GM12878 (cell line): ENCODE measurements at regions of chr12 and their contacts with region 1.

Region 1: DNA sequence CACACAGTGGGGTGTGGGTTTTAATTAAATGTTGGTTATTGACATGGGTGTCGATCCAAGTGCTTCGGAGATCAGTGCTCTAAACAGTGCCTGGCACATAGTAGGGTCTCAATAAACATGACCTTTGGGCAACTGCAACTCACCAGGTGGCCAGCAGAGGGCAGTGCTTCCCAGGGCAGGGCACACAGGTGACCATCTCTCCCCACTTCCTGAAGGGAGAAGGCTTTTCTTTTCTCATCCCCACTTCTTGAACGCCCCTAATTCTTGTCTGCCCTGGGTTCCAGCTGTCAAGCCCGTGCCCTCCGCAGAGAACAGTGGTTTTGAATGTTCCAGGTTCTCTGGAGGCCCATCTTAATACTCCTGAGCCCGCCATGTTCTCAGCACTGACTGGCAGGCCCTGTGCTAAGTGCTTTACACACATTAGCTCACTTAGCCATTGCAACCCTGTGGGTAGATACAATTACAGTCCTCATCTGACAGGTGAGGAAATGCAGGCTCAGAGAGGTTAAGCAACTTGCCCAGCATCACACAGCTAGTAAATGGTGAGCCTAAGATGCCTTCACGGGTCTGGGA is 16.3 kb downstream of the RAPGEF3 start:
- DNase-seq: no peak
- ATAC-seq: peak; percentile 57
- H3K4me3 ChIP-seq: no peak overlapping the region
- H3K27ac ChIP-seq: no peak overlapping the region
- H3K4me1 ChIP-seq: peaks cover 28% of the 10 kb centered on the region
- H3K27me3 ChIP-seq: no peaks in the 10 kb centered on the region
- CTCF ChIP-seq: peak; percentile 97 to 99 (median 99)
- EP300 ChIP-seq: no peak
- POLR2A ChIP-seq: no peak
- RAD21 ChIP-seq: peak; percentile 91

Region 2: DNA sequence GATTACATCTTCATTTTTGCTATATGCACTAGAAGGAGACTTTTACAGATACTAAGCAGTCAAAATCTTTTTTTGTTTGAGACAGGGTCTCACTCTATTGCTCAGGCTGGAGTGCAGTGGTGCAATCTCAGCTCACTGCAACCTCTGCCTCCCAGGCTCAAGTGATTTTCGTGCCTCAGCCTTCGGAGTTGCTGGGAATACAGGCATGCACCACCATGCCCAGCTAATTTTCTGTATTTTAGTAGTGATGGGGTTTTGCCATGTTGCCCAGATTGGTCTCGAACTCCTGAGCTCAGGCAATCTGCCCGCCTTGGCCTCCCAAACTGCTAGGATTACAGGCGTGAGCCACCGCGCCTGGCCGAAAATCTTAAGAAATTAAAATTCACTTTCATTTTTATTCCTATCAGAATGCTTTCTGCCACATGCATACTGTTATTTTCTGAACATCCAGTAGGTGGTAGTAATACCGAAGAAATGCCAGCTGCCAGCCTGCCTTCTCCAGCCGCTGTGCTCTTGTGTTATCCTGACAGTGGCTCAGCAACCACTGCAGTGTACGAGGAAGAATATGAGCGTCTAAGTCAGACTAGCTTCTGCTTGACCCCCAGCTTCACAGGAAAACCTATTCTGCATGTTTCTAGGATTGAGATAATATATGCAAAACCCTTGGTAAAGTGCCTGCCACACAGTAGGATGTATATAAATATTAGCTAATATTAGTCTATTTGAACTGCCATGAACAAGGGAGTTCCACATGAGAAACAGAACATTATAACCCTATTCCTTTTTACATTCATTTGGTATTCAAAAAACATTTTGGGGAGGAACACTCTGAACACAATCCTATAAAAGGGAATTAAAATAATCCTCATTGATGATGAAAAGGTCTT is 90.7 kb before region 1 on chr12:
- CTCF ChIA-PET with region 1: interaction called, 51 read pairs
- POLR2A ChIA-PET with region 1: no interaction called
- RAD21 ChIA-PET with region 1: interaction called, 12 read pairs
- SMC1A ChIA-PET with region 1: interaction called, 11 read pairs
- in situ Hi-C with region 1: no loop called
- intact Hi-C with region 1: no loop called
- DNase-seq: peak; percentile 23
- ATAC-seq: peak; percentile 96
- H3K4me3 ChIP-seq: no peak overlapping the region
- H3K27ac ChIP-seq: no peak overlapping the region
- H3K4me1 ChIP-seq: peaks cover 13% of the 10 kb centered on the region
- H3K27me3 ChIP-seq: no peaks in the 10 kb centered on the region
- CTCF ChIP-seq: peak; percentile 57 to 72 (median 67)
- EP300 ChIP-seq: no peak
- POLR2A ChIP-seq: no peak
- RAD21 ChIP-seq: peak; percentile 67

Region 3: DNA sequence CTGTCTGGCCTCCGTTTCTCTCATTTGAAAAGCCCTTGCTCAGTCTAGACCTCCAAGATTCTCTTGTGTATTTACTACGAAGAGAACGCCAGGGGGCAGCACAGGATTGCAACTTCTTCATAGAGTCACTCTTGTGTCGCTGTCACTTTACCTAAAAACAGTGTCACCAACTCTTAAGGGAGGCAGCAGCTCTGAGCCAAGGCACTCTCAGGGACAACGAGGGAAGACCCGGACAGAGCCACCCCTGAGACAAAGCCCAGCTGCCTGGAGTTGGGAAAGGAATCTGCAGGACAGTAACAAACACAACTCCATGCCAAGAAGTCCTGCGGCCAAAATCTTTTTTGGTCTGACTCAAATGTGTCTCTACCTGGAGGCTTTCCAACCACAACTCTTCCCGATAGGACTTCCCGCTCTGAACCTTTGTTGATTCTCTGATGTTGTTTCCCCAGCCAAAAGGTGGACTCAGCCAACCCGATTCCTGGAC is 26.9 kb before region 1 on chr12:
- CTCF ChIA-PET with region 1: interaction called, 151 read pairs
- POLR2A ChIA-PET with region 1: interaction called, 3 read pairs
- RAD21 ChIA-PET with region 1: interaction called, 61 read pairs
- SMC1A ChIA-PET with region 1: interaction called, 129 read pairs
- in situ Hi-C with region 1: no loop called
- intact Hi-C with region 1: loop called (anchors 1 kb)
- DNase-seq: no peak
- ATAC-seq: peak; percentile 92
- H3K4me3 ChIP-seq: no peak overlapping the region
- H3K27ac ChIP-seq: no peak overlapping the region
- H3K4me1 ChIP-seq: no peaks in the 10 kb centered on the region
- H3K27me3 ChIP-seq: no peaks in the 10 kb centered on the region
- CTCF ChIP-seq: peak; percentile 65 to 88 (median 75); a peak in 5 of 6 replicates
- EP300 ChIP-seq: no peak
- POLR2A ChIP-seq: no peak
- RAD21 ChIP-seq: peak; percentile 92

Region 4: DNA sequence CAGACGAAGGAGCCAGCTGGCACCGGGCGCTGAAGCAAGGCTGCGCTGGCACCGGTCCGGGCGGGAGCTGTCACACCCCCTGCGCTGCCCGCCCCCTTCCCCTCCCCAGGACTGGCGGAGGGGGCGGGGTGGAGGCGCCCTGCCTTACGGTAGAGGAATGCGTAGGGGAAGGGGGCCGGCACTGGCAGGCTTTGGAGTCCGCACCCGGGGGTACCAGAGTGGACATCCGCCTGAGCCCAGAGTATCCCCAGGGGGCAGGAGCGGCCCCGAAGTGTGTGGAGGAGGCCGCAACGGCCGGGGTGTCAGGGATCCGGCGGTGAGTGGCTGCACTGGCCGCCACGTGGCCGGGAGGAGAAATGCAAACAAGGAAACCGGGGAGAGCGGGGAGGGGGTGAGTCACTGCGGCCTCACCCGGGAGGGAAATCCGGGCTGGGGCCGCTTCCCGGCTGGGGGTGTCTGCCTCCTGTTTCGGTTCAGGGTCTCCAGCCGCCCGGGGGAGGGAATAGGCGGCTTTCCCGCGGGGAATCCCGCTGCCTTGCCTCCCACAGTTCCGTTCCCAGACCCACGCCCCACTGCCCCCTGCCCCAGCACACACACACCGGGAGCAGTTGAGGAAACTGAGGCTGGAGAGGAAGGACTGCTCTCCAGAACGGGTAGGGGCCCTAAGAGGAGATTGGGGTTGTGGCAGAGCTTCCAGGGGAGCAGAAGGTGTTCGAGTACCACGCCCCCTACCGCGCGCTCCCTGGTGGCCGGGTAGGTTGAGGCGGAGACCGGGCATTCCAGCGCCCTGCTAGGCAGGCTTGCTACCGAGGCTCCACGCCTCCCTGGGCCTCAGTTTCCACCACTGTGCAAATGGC is 16.7 kb after region 1 on chr12 and contains the start of gene RAPGEF3:
- CTCF ChIA-PET with region 1: interaction called, 507 read pairs
- POLR2A ChIA-PET with region 1: interaction called, 14 read pairs
- RAD21 ChIA-PET with region 1: interaction called, 237 read pairs
- SMC1A ChIA-PET with region 1: interaction called, 277 read pairs
- in situ Hi-C with region 1: no loop called
- intact Hi-C with region 1: loop called (anchors 1 kb)
- DNase-seq: no peak
- ATAC-seq: peak; percentile 68
- H3K4me3 ChIP-seq: peak within 1 kb of the TSS; percentile 66
- H3K27ac ChIP-seq: no peak within 1 kb of the TSS
- H3K4me1 ChIP-seq: peaks cover 37% of the 10 kb centered on the region
- H3K27me3 ChIP-seq: no peaks in the 10 kb centered on the region
- CTCF ChIP-seq: peak; percentile 36 to 68 (median 51); a peak in 5 of 6 replicates
- EP300 ChIP-seq: no peak
- POLR2A ChIP-seq: peak; percentile 21; the same call in 1 of the 2 replicates
- RAD21 ChIP-seq: no peak
- polyA plus RNA-seq, gene RAPGEF3: 0.02 TPM in 1 of 2 experiments, not detected in the other

Region 5: DNA sequence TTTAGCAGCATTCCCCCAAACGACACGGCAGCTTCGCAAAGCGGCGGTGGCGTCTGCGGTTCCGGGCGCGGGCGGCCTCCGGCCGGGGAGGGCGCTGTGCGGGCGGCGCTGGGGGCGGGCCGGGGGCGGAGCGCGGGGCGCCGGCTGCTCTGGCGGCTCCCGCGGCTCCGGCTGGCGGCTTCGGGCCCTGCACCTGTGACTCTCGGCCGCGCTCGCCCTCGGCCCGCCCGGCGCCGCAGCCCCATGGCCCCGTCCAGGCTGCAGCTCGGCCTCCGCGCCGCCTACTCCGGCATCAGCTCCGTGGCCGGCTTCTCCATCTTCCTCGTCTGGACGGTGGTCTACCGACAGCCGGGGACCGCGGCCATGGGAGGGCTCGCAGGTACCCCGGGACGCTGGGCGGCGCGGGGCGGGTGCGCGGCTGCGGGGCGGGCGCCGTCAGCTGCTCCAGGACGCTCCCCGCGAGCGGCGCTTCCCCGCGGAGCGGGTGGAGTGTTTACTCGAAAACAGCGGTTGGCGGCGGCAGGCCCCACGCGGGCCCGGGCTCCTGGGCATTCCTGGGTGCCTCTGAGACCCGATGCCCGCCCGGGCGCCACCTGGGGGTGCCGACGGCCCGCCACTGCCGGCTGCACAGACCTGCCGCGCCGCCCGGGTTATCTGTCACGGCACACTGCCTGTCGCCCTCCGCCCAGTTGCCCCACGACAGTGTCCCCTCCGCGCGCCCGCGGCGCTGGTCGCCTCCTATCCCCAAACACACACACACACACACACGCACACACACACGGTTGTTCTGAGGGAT is 30.9 kb after region 1 on chr12 and contains the start of gene SLC48A1:
- CTCF ChIA-PET with region 1: interaction called, 814 read pairs
- POLR2A ChIA-PET with region 1: interaction called, 40 read pairs
- RAD21 ChIA-PET with region 1: interaction called, 327 read pairs
- SMC1A ChIA-PET with region 1: interaction called, 267 read pairs
- in situ Hi-C with region 1: no loop called
- intact Hi-C with region 1: no loop called
- DNase-seq: no peak
- ATAC-seq: peak; percentile 93
- H3K4me3 ChIP-seq: peak within 1 kb of the TSS; percentile 80
- H3K27ac ChIP-seq: no peak within 1 kb of the TSS
- H3K4me1 ChIP-seq: peaks cover 17% of the 10 kb centered on the region; the same call in 1 of the 2 replicates
- H3K27me3 ChIP-seq: no peaks in the 10 kb centered on the region
- CTCF ChIP-seq: peak; percentile 16 to 47 (median 24); a peak in 4 of 6 replicates
- EP300 ChIP-seq: no peak
- POLR2A ChIP-seq: peak; percentile 62
- RAD21 ChIP-seq: no peak
- polyA plus RNA-seq, gene SLC48A1: 1.1 to 2.2 TPM

Region 6: DNA sequence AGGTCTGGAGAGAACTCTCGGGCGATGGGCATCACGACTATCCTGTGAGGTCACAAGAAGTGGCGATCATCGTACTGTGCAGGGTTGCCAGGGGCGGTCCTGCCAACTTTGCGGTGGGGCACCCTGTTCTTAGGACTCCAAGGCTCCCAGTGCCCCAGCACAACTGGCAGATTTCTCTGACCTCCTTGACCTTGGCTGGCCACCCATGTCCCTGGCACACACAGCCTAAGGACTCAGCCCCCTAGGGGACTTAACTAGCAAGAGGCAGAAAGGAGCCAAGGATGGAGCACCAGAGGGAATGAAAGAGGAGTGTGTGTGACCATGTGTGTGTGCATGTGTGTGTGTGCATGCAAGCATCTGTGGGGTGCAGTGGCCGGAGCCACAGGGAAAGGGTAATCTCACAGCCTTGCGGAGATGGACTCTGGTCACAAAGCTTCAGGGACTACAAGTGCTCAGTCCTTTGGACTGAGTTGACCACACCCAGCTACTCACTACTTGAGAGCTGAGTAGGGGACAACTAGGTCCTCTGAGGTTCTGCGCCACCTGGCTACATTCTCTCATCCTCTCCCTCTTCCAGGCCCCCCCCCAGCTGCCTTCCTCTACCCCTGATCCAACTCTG is 44.4 kb after region 1 on chr12:
- CTCF ChIA-PET with region 1: interaction called, 814 read pairs
- POLR2A ChIA-PET with region 1: no interaction called
- RAD21 ChIA-PET with region 1: interaction called, 120 read pairs
- SMC1A ChIA-PET with region 1: interaction called, 139 read pairs
- in situ Hi-C with region 1: no loop called
- intact Hi-C with region 1: no loop called
- DNase-seq: no peak
- ATAC-seq: no peak
- H3K4me3 ChIP-seq: no peak overlapping the region
- H3K27ac ChIP-seq: no peak overlapping the region
- H3K4me1 ChIP-seq: no peaks in the 10 kb centered on the region
- H3K27me3 ChIP-seq: no peaks in the 10 kb centered on the region
- CTCF ChIP-seq: no peak
- EP300 ChIP-seq: no peak
- POLR2A ChIP-seq: no peak
- RAD21 ChIP-seq: no peak

Region 7: GRCh38 chr12:47882781-47883546 is 140.6 kb after region 1 on chr12:
- CTCF ChIA-PET with region 1: interaction called, 12 read pairs
- POLR2A ChIA-PET with region 1: no interaction called
- RAD21 ChIA-PET with region 1: no interaction called
- SMC1A ChIA-PET with region 1: interaction called, 4 read pairs
- in situ Hi-C with region 1: no loop called
- intact Hi-C with region 1: no loop called
- DNase-seq: peak; percentile 77
- ATAC-seq: peak; percentile 73
- H3K4me3 ChIP-seq: peak overlapping the region; percentile 48; the same call in 1 of the 2 replicates
- H3K27ac ChIP-seq: peak overlapping the region; percentile 67
- H3K4me1 ChIP-seq: peaks cover 53% of the 10 kb centered on the region
- H3K27me3 ChIP-seq: no peaks in the 10 kb centered on the region
- CTCF ChIP-seq: no peak
- EP300 ChIP-seq: peak; percentile 89 to 92
- POLR2A ChIP-seq: peak; percentile 43; the same call in 1 of the 2 replicates
- RAD21 ChIP-seq: no peak

Region 8: GRCh38 chr12:48454667-48455066 is 712.3 kb after region 1 on chr12:
- CTCF ChIA-PET with region 1: no interaction called
- POLR2A ChIA-PET with region 1: no interaction called
- RAD21 ChIA-PET with region 1: no interaction called
- SMC1A ChIA-PET with region 1: no interaction called
- in situ Hi-C with region 1: no loop called
- intact Hi-C with region 1: no loop called
- DNase-seq: no peak
- ATAC-seq: no peak
- H3K4me3 ChIP-seq: no peak overlapping the region
- H3K27ac ChIP-seq: no peak overlapping the region
- H3K4me1 ChIP-seq: no peaks in the 10 kb centered on the region
- H3K27me3 ChIP-seq: no peaks in the 10 kb centered on the region
- CTCF ChIP-seq: peak in 2 of 3 experiments; percentile 13 to 25; a peak in 2 of 6 replicates
- EP300 ChIP-seq: no peak
- POLR2A ChIP-seq: no peak
- RAD21 ChIP-seq: peak; percentile 66